GM12878 (cell line): ENCODE measurements at regions of chr5 and their contacts with region 1.

Region 1: DNA sequence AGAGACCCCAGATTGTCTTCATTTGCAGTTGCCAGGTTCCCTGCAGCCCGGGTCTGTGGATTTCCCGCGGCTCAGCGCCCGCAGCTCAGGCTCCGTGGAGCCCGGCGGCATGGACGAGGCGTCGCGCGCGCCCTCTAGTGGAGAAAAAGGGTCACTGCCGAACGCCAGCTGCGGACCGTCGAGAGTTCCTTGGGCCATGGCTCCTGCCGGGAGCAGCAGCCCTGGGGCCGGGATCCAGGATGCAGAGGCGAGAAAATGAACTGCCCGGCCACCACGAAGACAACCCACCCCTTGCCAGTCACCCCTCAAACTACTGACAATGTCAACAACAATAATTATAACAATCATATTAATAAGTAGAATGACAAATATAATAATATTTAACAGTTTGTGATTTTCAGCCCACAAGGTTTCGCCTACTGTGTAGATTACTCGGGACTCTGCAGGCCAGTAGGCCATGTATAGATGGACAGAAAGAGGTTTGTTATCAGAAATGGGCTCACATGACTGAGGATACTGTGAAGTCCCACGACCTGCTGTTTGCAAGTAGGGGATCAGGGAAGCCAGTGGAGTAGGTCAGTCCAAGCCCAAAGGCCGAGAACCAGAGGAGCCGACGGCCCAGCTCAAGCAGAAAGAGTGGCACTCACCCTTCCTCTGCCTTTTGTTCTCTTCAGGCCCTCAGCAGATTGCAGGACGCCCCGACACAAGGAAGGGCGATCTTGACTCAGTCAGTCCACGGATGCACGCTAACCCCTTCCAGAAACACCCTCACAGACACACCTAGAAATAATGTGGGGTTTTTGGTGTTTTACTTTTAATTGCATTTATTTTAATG is 43.1 kb downstream of the BOD1 start:
- DNase-seq: no peak
- ATAC-seq: peak; percentile 98
- H3K4me3 ChIP-seq: no peak overlapping the region
- H3K27ac ChIP-seq: no peak overlapping the region
- H3K4me1 ChIP-seq: no peaks in the 10 kb centered on the region
- H3K27me3 ChIP-seq: no peaks in the 10 kb centered on the region; a peak in 1 of 4 replicates
- CTCF ChIP-seq: peak; percentile 81 to 96 (median 87)
- EP300 ChIP-seq: no peak
- POLR2A ChIP-seq: no peak
- RAD21 ChIP-seq: peak; percentile 79

Region 2: DNA sequence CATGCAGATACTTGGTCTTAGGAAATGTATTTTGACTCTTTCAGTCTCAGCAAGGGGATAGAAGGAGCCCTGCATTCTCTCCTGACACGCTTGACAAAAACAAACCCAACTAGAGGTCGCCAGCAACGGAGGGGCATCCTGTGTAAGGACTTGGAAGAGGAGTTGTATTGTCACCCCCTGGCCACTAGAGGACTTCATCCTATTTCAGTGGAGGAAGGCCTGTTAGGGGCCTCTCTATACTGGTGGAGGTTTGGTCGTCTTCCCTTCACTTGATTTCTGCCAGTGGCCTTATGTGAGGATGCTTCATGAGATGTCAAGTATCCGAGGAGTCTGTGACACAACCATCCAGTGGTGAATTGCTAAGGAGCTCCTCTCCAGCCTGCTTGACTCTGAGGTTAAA is 122.3 kb before region 1 on chr5:
- CTCF ChIA-PET with region 1: interaction called, 6 read pairs
- POLR2A ChIA-PET with region 1: no interaction called
- RAD21 ChIA-PET with region 1: no interaction called
- SMC1A ChIA-PET with region 1: interaction called, 3 read pairs
- in situ Hi-C with region 1: no loop called
- intact Hi-C with region 1: loop called (anchors 1 kb)
- DNase-seq: no peak
- ATAC-seq: peak; percentile 82
- H3K4me3 ChIP-seq: no peak overlapping the region
- H3K27ac ChIP-seq: no peak overlapping the region
- H3K4me1 ChIP-seq: no peaks in the 10 kb centered on the region
- H3K27me3 ChIP-seq: no peaks in the 10 kb centered on the region
- CTCF ChIP-seq: peak; percentile 51 to 75 (median 69)
- EP300 ChIP-seq: no peak
- POLR2A ChIP-seq: no peak
- RAD21 ChIP-seq: peak; percentile 54

Region 3: DNA sequence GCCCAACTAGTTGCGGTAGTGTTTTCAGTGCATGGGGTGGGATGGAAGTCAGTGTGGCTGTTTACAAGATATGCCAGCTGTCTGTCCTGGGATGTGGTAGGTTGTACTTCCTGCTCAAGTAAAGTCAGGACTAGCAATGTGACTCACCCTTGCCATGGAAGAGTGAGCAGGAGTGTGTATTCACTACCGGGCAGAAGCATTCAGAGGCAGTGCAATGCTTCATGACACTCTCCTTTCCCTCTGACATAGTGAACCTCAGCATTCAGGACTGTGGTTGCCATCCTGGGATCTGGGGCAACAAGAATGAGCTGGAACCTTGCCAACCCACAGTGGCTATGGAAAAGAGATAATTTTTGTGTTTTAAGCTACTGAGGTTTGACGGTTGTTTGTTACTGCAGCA is 25.8 kb before region 1 on chr5:
- CTCF ChIA-PET with region 1: interaction called, 11 read pairs
- POLR2A ChIA-PET with region 1: no interaction called
- RAD21 ChIA-PET with region 1: no interaction called
- SMC1A ChIA-PET with region 1: no interaction called
- in situ Hi-C with region 1: no loop called
- intact Hi-C with region 1: no loop called
- DNase-seq: peak; percentile 48
- ATAC-seq: peak; percentile 93
- H3K4me3 ChIP-seq: no peak overlapping the region
- H3K27ac ChIP-seq: no peak overlapping the region
- H3K4me1 ChIP-seq: peaks cover 10% of the 10 kb centered on the region
- H3K27me3 ChIP-seq: no peaks in the 10 kb centered on the region
- CTCF ChIP-seq: no peak
- EP300 ChIP-seq: no peak; a peak in 1 of 4 replicates
- POLR2A ChIP-seq: no peak
- RAD21 ChIP-seq: no peak

Region 4: DNA sequence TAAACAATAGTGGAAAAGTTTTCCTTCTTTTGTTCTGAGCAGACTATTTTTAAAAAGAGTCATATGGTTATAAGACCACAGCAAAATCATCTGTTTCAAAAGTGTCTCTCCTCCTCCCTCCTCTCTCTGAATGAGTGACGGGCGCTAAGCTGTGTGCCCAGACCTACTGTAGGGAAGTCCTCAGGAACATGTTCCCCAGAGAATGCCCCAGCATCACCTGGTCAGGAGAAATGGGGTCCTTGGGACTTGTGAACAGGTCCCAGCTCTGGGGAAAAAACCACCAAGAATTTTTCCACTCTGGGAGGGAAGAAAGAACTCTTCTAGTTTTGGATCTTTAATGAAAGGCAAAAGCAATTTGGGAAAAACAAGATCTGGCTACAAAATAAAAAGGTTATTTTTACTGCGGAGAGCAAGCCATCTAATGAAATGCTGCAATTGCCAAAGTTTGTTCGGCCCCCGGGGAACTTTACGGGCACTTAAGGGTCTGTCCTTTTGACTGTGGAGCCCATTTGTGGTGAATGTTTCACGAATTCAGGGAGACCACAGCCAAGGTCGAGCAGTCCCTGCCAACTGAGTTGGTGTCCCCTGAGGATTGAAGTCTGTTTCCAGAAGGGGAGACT is 17.2 kb after region 1 on chr5:
- CTCF ChIA-PET with region 1: no interaction called
- POLR2A ChIA-PET with region 1: no interaction called
- RAD21 ChIA-PET with region 1: no interaction called
- SMC1A ChIA-PET with region 1: no interaction called
- in situ Hi-C with region 1: no loop called
- intact Hi-C with region 1: no loop called
- DNase-seq: no peak
- ATAC-seq: no peak
- H3K4me3 ChIP-seq: no peak overlapping the region
- H3K27ac ChIP-seq: no peak overlapping the region
- H3K4me1 ChIP-seq: no peaks in the 10 kb centered on the region
- H3K27me3 ChIP-seq: no peaks in the 10 kb centered on the region
- CTCF ChIP-seq: no peak
- EP300 ChIP-seq: no peak
- POLR2A ChIP-seq: no peak
- RAD21 ChIP-seq: no peak